Right lobe of liver (tissue), 6 donors: ENCODE measurements at regions of chr4 and their contacts with region 1.

Region 1: DNA sequence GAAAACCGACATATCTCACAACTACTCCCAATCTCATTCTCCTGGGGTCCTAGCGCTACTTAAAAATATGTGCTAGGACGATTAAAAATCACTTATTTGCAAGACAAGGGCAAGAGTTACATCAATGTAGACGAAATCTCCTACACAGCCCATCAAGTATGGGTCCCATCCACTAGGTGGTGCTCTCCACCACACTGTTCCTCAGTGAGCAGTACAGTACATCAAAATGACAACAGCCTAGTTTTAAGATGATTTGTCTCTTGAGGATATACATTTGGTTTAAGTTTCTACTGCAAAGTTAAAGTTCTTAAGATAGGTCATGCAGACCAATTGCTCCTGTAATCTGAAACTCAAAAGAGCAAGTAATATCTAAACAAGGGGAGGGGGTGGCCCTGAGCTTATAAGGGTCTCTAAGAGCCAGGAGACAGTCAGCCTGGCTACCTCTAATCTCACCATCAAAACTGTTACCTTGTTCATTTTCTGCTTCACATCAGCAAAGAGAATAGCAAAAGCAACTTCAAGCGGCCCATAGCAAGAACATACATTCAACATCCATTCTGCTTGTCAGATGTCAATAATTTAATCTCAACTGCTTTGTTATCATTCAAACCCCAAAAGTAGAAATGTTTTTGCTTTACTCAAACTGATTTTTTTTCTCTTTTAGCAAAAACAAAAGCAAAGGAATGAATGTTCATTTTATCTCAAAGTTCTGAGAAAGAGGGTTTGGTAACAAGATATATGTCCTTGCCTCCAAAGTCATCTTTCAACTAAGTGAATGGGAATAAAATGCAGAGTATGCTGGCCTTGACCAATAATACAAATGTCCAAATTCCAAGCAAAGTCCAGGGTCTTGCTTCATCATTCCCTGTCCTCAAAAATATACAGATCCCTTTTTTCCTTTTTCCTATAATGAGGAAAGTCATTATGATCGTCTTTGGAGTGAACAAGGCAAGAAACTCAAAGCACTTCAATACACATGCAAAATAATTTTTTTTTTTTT is 53.1 kb downstream of the STX18 start:
- DNase-seq: peak; percentile 53 to 71 (median 58)
- ATAC-seq: peak; percentile 90 to 95 (median 92)
- H3K4me3 ChIP-seq: no peak overlapping the region
- H3K27ac ChIP-seq: no peak overlapping the region
- H3K4me1 ChIP-seq: peaks cover 0 to 54% (median 7%) of the 10 kb centered on the region in 4 donors
- H3K27me3 ChIP-seq: no peaks in the 10 kb centered on the region
- CTCF ChIP-seq: peak; percentile 87 to 94 (median 92)
- POLR2A ChIP-seq: no peak

Region 2: GRCh38 chr4:4226606-4227438 is 261.9 kb before region 1 on chr4 and contains the start of gene OTOP1:
- intact Hi-C with region 1: no loop called
- DNase-seq: no peak
- ATAC-seq: no peak
- H3K4me3 ChIP-seq: no peak within 1 kb of the TSS
- H3K27ac ChIP-seq: no peak within 1 kb of the TSS
- H3K4me1 ChIP-seq: no peaks in the 10 kb centered on the region
- H3K27me3 ChIP-seq: no peaks in the 10 kb centered on the region
- CTCF ChIP-seq: no peak
- POLR2A ChIP-seq: no peak
- total RNA-seq, gene OTOP1: not detected

Region 3: DNA sequence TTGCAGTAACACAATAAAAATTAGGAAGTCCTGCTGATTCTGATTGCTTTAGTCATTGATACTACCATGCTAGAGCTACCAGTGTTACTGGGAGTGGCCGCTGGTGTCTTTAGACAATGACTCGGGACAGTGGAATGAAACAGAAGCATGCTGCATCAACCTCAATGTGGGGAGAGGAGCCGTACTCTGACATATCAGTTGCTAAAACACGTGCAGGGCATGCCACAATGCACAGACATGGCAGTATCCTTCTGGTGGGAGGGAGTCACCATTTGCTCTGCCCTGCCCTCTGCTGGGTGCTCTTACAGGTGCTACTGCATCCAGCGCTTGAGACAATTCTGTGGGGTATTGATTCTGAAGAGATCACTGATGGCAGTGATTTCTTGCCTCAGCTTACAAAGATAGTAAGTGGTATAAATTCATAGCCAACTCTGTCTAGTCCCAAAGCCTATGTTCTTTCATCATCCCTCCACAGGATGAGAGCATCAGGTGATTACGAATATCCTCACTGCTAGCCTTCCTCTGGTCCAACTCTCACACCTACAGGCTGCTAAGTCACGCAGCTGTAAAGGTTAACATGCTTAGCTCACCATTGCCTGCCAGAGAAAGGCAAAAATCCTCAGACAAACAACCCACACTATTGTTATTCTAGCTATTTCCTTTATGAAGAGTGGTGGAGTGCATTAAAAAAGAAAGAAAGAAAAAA is 58.1 kb before region 1 on chr4:
- intact Hi-C with region 1: no loop called
- DNase-seq: no peak
- ATAC-seq: peak; percentile 74 to 87 (median 82)
- H3K4me3 ChIP-seq: no peak overlapping the region
- H3K27ac ChIP-seq: no peak overlapping the region
- H3K4me1 ChIP-seq: no peaks in the 10 kb centered on the region
- H3K27me3 ChIP-seq: no peaks in the 10 kb centered on the region
- CTCF ChIP-seq: peak; percentile 35 to 67 (median 58)
- POLR2A ChIP-seq: no peak

Region 4: GRCh38 chr4:4880492-4880891 is 391.8 kb after region 1 on chr4:
- intact Hi-C with region 1: loop called in 1 of 2 experiments (anchors 10 kb)
- DNase-seq: no peak
- ATAC-seq: no peak
- H3K4me3 ChIP-seq: no peak overlapping the region
- H3K27ac ChIP-seq: no peak overlapping the region
- H3K4me1 ChIP-seq: no peaks in the 10 kb centered on the region
- H3K27me3 ChIP-seq: no peaks in the 10 kb centered on the region
- CTCF ChIP-seq: peak; percentile 8 to 48 (median 25)
- POLR2A ChIP-seq: no peak

Region 5: GRCh38 chr4:4981427-4981826 is 492.7 kb after region 1 on chr4:
- intact Hi-C with region 1: no loop called
- DNase-seq: peak in 1 of 3 donors; percentile 60
- ATAC-seq: peak in 3 of 4 donors; percentile 51 to 93 (median 71)
- H3K4me3 ChIP-seq: no peak overlapping the region
- H3K27ac ChIP-seq: no peak overlapping the region
- H3K4me1 ChIP-seq: no peaks in the 10 kb centered on the region
- H3K27me3 ChIP-seq: no peaks in the 10 kb centered on the region
- CTCF ChIP-seq: no peak
- POLR2A ChIP-seq: no peak